GM10248 (cell line): ENCODE measurements at regions of chr16 and their contacts with region 1.

Region 1: DNA sequence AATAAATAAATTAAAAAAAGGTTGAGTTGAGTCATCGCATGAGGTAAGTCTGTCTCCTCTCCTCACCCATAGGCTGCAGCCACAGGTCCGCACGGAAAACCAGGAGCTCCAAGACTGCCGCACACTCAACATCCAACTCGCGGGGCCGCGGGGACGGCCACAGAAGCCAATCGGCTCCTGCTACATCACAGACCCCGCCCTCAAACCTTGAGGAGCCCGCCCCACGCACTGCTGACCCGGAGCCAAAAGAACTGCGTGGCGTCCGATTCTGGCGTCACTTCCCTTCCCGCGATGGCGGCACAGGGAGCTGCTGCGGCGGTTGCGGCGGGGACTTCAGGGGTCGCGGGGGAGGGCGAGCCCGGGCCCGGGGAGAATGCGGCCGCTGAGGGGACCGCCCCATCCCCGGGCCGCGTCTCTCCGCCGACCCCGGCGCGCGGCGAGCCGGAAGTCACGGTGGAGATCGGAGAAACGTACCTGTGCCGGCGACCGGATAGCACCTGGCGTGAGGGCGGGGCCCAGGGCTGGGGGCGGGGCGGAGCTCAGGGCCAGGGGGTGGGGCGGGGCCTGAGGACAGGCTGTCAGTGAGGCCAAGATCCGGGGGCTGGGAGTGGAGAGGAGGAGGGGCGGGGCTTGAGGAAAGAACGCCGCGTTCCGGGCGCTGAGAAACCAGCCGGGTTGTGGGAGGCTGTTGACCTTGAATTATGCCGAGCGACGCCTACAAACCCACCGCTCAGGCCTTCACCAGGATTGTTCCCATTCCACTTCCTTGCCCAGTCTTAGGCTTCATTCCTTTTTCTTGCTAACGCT is at the start of gene KAT8:
- DNase-seq: peak; percentile 99
- CTCF ChIP-seq: no peak

Region 2: GRCh38 chr16:31128711-31129567 is 11.3 kb after region 1 on chr16:
- CTCF ChIA-PET with region 1: interaction called, 14 read pairs
- POLR2A ChIA-PET with region 1: interaction called, 8 read pairs
- DNase-seq: no peak
- CTCF ChIP-seq: no peak